Natural killer cell (primary cell): ENCODE measurements at regions of chr7 and their contacts with region 1.

Region 1: DNA sequence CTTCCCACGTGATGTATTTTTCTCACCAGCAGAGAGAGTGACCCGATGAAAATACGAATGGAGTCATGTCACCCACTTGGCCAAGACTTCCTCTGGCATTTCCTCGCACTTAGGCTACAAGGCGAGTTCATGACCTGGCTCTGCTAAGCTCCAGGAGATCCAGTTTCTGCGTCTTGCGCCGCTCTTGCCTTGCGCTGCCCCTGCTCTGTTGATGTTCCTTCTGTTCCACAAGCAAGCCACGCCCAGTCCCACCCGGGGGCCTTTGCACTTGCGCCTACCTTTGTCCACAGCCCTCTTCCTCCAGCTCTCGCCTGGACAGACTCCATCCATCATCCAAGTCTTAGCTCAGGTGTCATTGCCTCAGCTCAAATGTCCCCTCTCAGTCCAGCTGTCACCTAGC is 116.3 kb upstream of the SHH start:
- DNase-seq: no peak
- ATAC-seq: no peak
- H3K4me3 ChIP-seq: no peak overlapping the region
- H3K4me3 Mint-ChIP-seq: no peak overlapping the region
- H3K27ac ChIP-seq: no peak overlapping the region
- H3K27ac Mint-ChIP-seq: no peak overlapping the region
- H3K4me1 ChIP-seq: no peaks in the 10 kb centered on the region
- H3K4me1 Mint-ChIP-seq: no peaks in the 10 kb centered on the region
- H3K27me3 ChIP-seq: no peaks in the 10 kb centered on the region
- H3K27me3 Mint-ChIP-seq: no peaks in the 10 kb centered on the region
- CTCF ChIP-seq: no peak

Region 2: DNA sequence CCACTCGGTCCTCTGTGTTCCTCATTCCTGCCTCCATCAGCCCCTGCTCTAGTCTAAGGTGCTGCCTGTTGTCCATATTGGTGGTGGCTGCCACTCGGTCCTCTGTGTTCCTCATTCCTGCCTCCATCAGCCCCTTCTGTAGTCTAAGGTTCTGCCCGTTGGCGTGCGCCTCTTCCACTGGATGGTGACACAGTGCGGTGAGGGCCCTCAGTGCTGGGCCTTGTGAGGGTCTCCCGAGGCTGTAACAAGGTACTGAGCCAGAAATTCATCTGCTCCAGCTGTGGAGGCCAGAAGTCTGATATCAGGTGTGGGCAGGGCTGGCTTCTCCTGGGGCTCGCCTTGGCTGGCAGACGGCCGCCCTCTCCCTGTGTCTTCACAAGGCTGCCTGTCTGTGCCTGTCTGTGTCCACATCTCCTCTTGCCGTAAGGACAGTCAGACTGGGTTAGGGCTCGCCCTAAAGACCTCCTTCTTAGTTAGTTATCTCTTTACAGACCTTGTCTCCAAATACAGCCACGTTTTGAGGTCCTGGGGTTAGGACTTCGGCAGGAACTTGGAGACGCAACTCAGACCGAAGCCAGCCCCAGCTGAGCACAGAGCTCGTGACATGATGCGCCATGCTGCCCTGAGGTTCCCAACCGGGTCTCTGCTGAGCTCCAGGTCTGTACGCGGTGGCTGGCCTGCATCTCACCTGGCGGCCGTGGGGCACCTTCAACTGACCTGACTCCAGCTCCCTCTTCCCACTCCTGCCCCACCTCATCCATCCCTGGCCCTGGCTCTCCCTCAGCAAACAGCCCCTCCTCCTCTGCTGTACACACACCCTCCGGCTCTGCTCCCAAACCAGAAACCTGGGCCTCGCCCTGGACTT is 65.1 kb after region 1 on chr7:
- intact Hi-C with region 1: no loop called
- DNase-seq: no peak
- ATAC-seq: no peak
- H3K4me3 ChIP-seq: no peak overlapping the region
- H3K4me3 Mint-ChIP-seq: no peak overlapping the region
- H3K27ac ChIP-seq: no peak overlapping the region
- H3K27ac Mint-ChIP-seq: no peak overlapping the region
- H3K4me1 ChIP-seq: peaks cover 40% of the 10 kb centered on the region
- H3K4me1 Mint-ChIP-seq: peaks cover 8 to 9% of the 10 kb centered on the region in 2 donors
- H3K27me3 ChIP-seq: no peaks in the 10 kb centered on the region
- H3K27me3 Mint-ChIP-seq: peaks cover 0 to 9% of the 10 kb centered on the region in 2 donors
- CTCF ChIP-seq: no peak

Region 3: GRCh38 chr7:156219307-156220077 is 290.9 kb after region 1 on chr7:
- intact Hi-C with region 1: loop called (anchors 5 kb)
- DNase-seq: no peak
- ATAC-seq: no peak
- H3K4me3 ChIP-seq: no peak overlapping the region
- H3K4me3 Mint-ChIP-seq: no peak overlapping the region
- H3K27ac ChIP-seq: no peak overlapping the region
- H3K27ac Mint-ChIP-seq: no peak overlapping the region
- H3K4me1 ChIP-seq: no peaks in the 10 kb centered on the region
- H3K4me1 Mint-ChIP-seq: no peaks in the 10 kb centered on the region
- H3K27me3 ChIP-seq: no peaks in the 10 kb centered on the region
- H3K27me3 Mint-ChIP-seq: no peaks in the 10 kb centered on the region
- CTCF ChIP-seq: no peak

Region 4: GRCh38 chr7:156735851-156736250 is 807.3 kb after region 1 on chr7:
- intact Hi-C with region 1: no loop called
- DNase-seq: no peak
- ATAC-seq: no peak
- H3K4me3 ChIP-seq: no peak overlapping the region
- H3K4me3 Mint-ChIP-seq: no peak overlapping the region
- H3K27ac ChIP-seq: no peak overlapping the region
- H3K27ac Mint-ChIP-seq: no peak overlapping the region
- H3K4me1 ChIP-seq: no peaks in the 10 kb centered on the region
- H3K4me1 Mint-ChIP-seq: no peaks in the 10 kb centered on the region
- H3K27me3 ChIP-seq: no peaks in the 10 kb centered on the region
- H3K27me3 Mint-ChIP-seq: no peaks in the 10 kb centered on the region
- CTCF ChIP-seq: no peak